HAP-1 (cell line): ENCODE measurements at regions of chr6 and their contacts with region 1.

Region 1: GRCh38 chr6:170529839-170530469 is 23.2 kb downstream of the PSMB1 start:
- DNase-seq: peak; percentile 69 to 81
- H3K4me3 ChIP-seq: no peak overlapping the region
- H3K4me1 ChIP-seq: peaks cover 15% of the 10 kb centered on the region
- H3K27me3 ChIP-seq: peaks cover 4% of the 10 kb centered on the region

Region 2: GRCh38 chr6:169520104-169520503 is 1009.9 kb before region 1 on chr6:
- in situ Hi-C with region 1: no loop called
- DNase-seq: no peak
- H3K4me3 ChIP-seq: no peak overlapping the region
- H3K4me1 ChIP-seq: no peaks in the 10 kb centered on the region
- H3K27me3 ChIP-seq: no peaks in the 10 kb centered on the region

Region 3: GRCh38 chr6:169789982-169790927 is 739.7 kb before region 1 on chr6:
- in situ Hi-C with region 1: loop called (anchors 10 kb)
- DNase-seq: peak; percentile 81 to 84
- H3K4me3 ChIP-seq: peak overlapping the region; percentile 30
- H3K4me1 ChIP-seq: peaks cover 11% of the 10 kb centered on the region
- H3K27me3 ChIP-seq: no peaks in the 10 kb centered on the region